ENCODE measurements at regions of chr11 and their contacts with region 1.

Region 1: GRCh38 chr11:125345421-125346178 is 150.5 kb downstream of the FEZ1 start:
- DNase-seq: peak; percentile 82
- ATAC-seq: peak; percentile 57
- H3K4me3 Mint-ChIP-seq: no peak overlapping the region
- H3K27ac Mint-ChIP-seq: no peak overlapping the region
- H3K4me1 Mint-ChIP-seq: peaks cover 57% of the 10 kb centered on the region
- H3K27me3 Mint-ChIP-seq: peaks cover 20% of the 10 kb centered on the region
- CTCF ChIP-seq: peak; percentile 77

Region 2: DNA sequence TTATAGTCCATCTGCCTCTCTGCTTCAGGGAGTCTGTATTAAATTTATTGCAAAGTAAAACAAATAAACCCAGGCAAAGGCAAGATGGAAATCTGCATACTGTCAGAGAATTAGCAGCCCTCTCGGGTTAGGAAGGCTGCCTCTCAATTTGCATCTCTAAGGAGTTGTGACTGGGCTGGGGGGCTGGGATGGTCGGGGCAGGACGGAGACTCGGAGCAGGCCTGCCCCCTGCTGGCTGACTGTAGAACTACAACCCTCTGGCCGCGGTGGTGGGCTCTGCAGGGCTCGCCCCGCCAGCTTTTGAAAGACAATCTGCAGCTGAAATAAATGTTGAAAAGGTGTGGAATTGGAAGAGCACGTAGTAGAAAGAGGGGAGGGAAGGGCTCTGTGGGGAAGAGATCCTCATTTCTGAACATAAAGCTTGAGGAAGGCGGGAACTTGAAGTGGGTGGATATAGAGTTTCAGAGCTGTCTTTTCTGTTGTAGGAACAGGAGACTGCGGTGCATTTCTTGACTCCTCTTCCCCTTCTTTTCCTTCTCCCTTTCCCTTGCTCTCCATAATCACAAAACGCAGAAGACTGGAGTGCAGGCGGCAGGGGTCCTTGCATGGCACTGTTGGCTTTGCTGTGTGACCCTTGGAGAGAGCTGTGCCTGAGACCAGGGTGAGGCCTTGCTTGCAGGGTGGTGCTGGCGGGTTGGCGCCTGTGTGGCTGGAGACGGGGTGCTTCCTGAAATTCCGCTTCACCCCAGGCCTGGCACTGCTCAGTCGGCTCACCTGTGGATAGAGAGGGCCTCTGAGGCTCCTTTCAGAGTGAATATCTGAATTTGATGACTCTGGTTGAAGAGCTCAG is 203.7 kb before region 1 on chr11:
- CTCF ChIA-PET with region 1: interaction called, 29 read pairs
- POLR2A ChIA-PET with region 1: no interaction called
- DNase-seq: peak; percentile 90
- ATAC-seq: peak; percentile 88
- H3K4me3 Mint-ChIP-seq: peak overlapping the region; percentile 53
- H3K27ac Mint-ChIP-seq: no peak overlapping the region
- H3K4me1 Mint-ChIP-seq: peaks cover 62% of the 10 kb centered on the region
- H3K27me3 Mint-ChIP-seq: peaks cover 89% of the 10 kb centered on the region
- CTCF ChIP-seq: peak; percentile 99

Region 3: DNA sequence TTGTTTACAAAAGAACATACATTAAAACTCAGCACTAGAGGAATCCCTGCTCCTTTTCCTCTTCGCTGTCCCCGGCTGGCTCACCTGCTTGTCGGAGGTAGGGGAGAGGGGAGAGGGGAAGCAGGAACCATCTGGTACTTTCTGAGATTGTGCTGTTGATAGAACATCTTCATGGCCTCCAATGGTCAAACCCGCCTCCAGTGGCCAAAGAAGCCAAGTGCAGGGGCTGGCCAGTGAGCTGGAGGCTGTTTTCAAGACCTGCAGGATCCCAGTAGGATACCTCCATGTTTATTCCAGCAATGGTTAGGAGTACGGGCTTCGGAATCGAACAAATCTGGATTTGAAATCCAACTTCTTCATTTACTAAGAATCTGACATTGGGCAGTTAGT is 88.4 kb before region 1 on chr11:
- CTCF ChIA-PET with region 1: interaction called, 11 read pairs
- POLR2A ChIA-PET with region 1: no interaction called
- DNase-seq: peak; percentile 69
- ATAC-seq: peak; percentile 76
- H3K4me3 Mint-ChIP-seq: no peak overlapping the region
- H3K27ac Mint-ChIP-seq: no peak overlapping the region
- H3K4me1 Mint-ChIP-seq: peaks cover 43% of the 10 kb centered on the region
- H3K27me3 Mint-ChIP-seq: peaks cover 12% of the 10 kb centered on the region
- CTCF ChIP-seq: peak; percentile 32; the same call in 1 of the 2 replicates

Region 4: DNA sequence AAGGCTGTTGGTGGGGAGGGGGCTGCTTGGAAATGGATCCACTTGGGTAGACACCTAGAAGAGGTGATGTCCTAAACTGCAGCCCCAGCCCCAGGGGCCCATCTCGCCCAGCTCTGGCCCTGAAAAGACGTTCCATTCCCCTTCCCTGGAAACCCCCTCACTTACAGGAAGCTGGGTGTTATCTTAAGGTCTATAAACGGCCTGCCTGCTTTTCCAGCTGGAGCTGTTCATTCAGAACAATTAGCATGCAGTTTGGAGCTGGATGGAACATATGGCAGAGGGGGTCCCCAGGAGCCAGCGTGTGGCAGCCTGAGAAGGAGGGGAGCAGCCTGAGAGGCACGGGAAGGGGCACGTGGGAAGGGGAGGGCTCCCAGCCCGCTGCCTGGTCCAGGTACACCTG is 41.5 kb before region 1 on chr11:
- CTCF ChIA-PET with region 1: interaction called, 23 read pairs
- POLR2A ChIA-PET with region 1: interaction called, 3 read pairs
- DNase-seq: no peak
- ATAC-seq: no peak
- H3K4me3 Mint-ChIP-seq: no peak overlapping the region
- H3K27ac Mint-ChIP-seq: no peak overlapping the region
- H3K4me1 Mint-ChIP-seq: peaks cover 8% of the 10 kb centered on the region
- H3K27me3 Mint-ChIP-seq: no peaks in the 10 kb centered on the region; the same call in 1 of the 2 replicates
- CTCF ChIP-seq: no peak

Region 5: DNA sequence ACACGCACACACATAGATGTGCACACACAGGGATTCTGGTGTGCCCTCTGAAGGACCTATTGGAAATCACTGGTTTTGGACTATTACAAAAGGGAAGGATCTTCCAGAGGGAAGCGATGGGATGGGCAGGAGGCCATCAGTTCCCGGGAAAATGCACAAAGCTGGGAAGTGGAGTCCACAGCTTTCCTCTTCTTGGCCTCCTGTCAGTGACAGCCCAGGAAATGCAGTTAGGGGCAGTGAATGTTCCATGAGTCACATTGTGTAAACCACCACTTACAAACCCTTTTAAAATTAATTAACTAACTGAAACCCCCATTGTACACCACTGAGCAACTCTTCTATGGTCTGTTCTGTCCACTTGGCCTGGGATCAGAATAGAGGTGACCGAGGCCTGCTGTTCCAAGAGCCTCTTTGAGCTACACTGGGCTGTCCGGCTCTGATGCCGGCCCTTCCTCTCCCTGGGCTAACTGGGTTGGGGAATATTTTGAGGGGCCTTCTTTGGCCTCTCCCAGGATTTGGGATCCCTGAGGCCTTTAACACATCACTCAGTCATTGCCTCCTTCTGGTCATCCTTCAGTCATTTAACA is 12.7 kb after region 1 on chr11:
- CTCF ChIA-PET with region 1: interaction called, 18 read pairs
- POLR2A ChIA-PET with region 1: interaction called, 3 read pairs
- DNase-seq: no peak
- ATAC-seq: no peak
- H3K4me3 Mint-ChIP-seq: no peak overlapping the region
- H3K27ac Mint-ChIP-seq: no peak overlapping the region
- H3K4me1 Mint-ChIP-seq: no peaks in the 10 kb centered on the region; the same call in 1 of the 2 replicates
- H3K27me3 Mint-ChIP-seq: no peaks in the 10 kb centered on the region; the same call in 1 of the 2 replicates
- CTCF ChIP-seq: no peak

Region 6: GRCh38 chr11:125410091-125410490 is 64.5 kb after region 1 on chr11:
- CTCF ChIA-PET with region 1: interaction called, 96 read pairs
- POLR2A ChIA-PET with region 1: no interaction called
- DNase-seq: peak; percentile 67
- ATAC-seq: peak; percentile 83
- H3K4me3 Mint-ChIP-seq: no peak overlapping the region
- H3K27ac Mint-ChIP-seq: no peak overlapping the region
- H3K4me1 Mint-ChIP-seq: peaks cover 21% of the 10 kb centered on the region
- H3K27me3 Mint-ChIP-seq: peaks cover 6% of the 10 kb centered on the region; the same call in 1 of the 2 replicates
- CTCF ChIP-seq: no peak

Region 7: DNA sequence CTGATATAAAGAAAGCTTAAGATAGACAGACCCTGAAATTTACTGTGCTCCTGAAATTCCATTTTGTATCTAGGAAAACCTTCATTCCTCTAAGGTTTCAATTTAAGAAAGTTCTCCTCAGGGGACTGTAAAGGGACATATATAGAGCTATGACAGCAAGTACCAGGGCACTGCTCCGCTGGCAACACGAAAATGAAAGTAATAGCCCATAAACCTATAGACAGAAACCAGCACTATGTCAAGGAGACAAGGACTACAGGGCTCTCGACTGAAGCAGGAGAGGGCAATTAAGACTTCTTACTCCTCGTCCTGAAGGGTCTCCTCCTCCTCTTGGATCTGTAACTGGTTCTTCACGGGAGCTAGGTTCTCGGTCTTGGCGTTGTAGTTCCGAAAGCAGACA is 143.6 kb after region 1 on chr11:
- CTCF ChIA-PET with region 1: no interaction called
- POLR2A ChIA-PET with region 1: no interaction called
- DNase-seq: no peak
- ATAC-seq: no peak
- H3K4me3 Mint-ChIP-seq: no peak overlapping the region
- H3K27ac Mint-ChIP-seq: no peak overlapping the region
- H3K4me1 Mint-ChIP-seq: peaks cover 16% of the 10 kb centered on the region
- H3K27me3 Mint-ChIP-seq: peaks cover 13% of the 10 kb centered on the region
- CTCF ChIP-seq: no peak

Region 8: DNA sequence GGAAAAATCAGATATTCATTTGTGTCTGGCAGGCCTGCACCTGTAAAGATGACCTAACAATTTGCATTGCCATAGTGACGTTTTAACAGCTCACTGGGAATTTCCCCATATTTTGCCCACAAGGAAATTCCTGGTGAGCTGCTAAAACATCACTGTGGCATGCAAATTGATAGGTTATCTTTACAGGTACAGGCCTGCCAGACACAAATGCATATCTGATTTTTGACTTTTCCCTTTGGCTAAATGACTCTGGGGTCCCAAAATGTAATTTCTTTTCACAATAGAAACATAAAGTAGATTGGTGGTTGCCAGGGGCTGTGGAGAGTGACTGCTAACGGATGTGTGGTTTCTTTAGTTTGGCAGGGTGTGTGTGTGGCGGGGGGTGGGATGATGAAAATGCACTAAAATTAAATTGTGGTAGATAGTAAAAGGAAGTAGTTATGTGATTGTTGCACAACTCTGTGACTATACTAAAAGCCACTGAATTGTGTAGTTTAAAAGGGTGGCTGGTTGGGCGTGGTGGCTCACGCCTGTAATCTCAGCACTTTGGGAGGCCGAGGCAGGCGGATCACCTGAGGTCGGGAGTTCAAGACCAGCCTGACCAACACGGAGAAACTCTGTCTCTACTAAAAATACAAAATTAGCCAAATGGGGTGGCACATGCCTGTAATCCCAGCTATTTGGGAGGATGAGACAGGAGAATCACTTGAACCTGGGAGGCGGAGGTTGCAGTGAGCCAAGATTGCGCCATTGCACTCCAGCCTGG is 168.9 kb after region 1 on chr11:
- CTCF ChIA-PET with region 1: no interaction called
- POLR2A ChIA-PET with region 1: no interaction called
- DNase-seq: no peak
- ATAC-seq: no peak
- H3K4me3 Mint-ChIP-seq: no peak overlapping the region
- H3K27ac Mint-ChIP-seq: no peak overlapping the region
- H3K4me1 Mint-ChIP-seq: peaks cover 37% of the 10 kb centered on the region
- H3K27me3 Mint-ChIP-seq: no peaks in the 10 kb centered on the region
- CTCF ChIP-seq: no peak

Measured in WTC11 (cell line).